PC-3 (cell line): ENCODE measurements at regions of chr17 and their contacts with region 1.

Region 1: DNA sequence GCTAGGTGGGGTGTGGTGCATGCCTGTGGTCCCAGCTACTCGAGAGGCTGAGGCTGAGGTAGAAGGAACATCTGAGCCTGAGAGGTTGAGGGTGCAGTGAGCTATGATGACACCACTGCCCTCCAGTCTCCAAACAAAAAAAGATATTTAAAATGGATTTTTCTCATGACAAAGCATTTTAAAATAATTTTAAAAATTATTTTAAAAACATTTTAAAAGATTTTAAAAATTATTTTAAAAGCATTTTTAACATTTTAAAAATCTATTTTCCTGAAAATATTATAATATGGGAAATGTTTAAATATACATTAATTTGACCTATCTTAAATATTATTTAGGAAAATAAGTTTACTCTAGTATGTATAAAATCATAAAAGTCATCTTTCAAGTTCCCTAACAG is 26.8 kb downstream of the MED13 start:
- DNase-seq: no peak
- ATAC-seq: no peak
- H3K4me3 ChIP-seq: no peak overlapping the region
- H3K27ac ChIP-seq: no peak overlapping the region
- H3K4me1 ChIP-seq: no peaks in the 10 kb centered on the region
- H3K27me3 ChIP-seq: no peaks in the 10 kb centered on the region
- CTCF ChIP-seq: no peak

Region 2: DNA sequence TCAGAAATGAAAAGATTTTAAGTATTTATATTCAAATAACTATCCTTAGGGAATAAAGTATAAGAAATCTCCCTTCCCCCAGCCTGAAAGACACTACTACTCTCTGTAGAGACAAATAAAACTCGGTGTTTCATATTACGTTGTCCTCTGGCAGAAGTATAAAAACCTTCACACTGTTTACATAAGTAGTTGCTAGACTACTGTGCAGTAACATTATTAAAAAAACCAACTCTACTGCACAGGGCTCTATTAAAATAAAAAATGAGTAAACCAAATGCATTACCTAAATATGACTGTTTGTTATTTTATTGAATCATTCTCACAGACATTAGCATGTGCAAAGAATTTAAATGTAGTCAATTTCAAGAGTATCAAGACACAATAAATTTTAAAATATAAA is 40.6 kb before region 1 on chr17:
- CTCF ChIA-PET with region 1: no interaction called
- POLR2A ChIA-PET with region 1: interaction called, 23 read pairs
- intact Hi-C with region 1: no loop called
- DNase-seq: peak; percentile 83
- ATAC-seq: peak; percentile 99
- H3K4me3 ChIP-seq: no peak overlapping the region
- H3K27ac ChIP-seq: peak overlapping the region; percentile 86
- H3K4me1 ChIP-seq: peaks cover 14% of the 10 kb centered on the region
- H3K27me3 ChIP-seq: no peaks in the 10 kb centered on the region
- CTCF ChIP-seq: no peak